A673 (cell line): ENCODE measurements at regions of chr1 and their contacts with region 1.

Region 1: DNA sequence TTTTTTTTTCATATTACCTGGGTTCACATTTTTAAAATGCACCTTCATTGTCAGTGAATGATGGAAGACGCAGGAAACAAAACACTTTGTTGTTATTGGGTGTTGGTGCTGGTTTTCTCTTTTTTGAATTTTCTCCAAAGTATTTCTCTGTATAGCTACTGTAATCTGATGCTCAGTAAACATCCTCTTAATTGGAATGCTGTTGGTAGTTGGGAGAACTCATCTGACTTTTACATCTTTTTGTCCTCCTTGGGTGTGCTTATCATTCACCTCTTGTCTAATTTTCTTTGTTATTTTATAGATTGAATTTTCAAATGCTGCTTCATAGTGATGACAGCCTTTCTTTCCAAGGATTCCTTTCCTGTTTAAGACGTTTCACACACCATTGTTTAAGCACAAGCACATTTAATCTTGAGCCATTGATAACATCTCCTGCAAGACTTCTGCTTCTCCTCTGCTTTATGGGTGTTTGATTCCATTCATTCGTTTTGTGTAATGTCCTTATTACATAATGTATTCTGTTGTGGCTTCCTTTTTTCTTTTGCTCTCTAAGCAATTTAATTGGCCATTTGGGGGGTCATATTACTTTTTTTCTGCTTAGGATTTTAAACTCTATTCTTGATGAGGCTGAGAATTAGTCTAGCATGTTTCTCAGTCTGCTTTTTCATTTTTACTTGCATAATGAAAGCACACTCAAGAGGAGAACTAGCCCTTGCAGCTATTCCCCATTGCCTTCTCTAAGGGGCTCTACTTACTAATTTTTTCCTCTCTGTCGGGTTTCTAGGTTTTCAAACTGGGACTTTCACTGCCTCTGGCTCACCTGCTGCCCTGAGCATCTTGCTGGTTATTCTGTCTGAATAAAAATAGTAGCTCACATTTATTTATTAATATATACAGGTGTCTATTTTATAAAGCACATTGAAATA is 42.0 kb upstream of the CD34 start:
- DNase-seq: no peak
- H3K4me3 ChIP-seq: no peak overlapping the region
- H3K27ac ChIP-seq: no peak overlapping the region
- H3K4me1 ChIP-seq: no peaks in the 10 kb centered on the region
- H3K27me3 ChIP-seq: peaks cover 84% of the 10 kb centered on the region
- CTCF ChIP-seq: no peak

Region 2: GRCh38 chr1:207897188-207897587 is 55.7 kb before region 1 on chr1:
- CTCF ChIA-PET with region 1: no interaction called
- POLR2A ChIA-PET with region 1: no interaction called
- intact Hi-C with region 1: loop called (anchors 2 kb)
- DNase-seq: no peak
- H3K4me3 ChIP-seq: no peak overlapping the region
- H3K27ac ChIP-seq: no peak overlapping the region
- H3K4me1 ChIP-seq: no peaks in the 10 kb centered on the region
- H3K27me3 ChIP-seq: peaks cover 2% of the 10 kb centered on the region
- CTCF ChIP-seq: peak; percentile 31; the same call in 1 of the 2 replicates

Region 3: DNA sequence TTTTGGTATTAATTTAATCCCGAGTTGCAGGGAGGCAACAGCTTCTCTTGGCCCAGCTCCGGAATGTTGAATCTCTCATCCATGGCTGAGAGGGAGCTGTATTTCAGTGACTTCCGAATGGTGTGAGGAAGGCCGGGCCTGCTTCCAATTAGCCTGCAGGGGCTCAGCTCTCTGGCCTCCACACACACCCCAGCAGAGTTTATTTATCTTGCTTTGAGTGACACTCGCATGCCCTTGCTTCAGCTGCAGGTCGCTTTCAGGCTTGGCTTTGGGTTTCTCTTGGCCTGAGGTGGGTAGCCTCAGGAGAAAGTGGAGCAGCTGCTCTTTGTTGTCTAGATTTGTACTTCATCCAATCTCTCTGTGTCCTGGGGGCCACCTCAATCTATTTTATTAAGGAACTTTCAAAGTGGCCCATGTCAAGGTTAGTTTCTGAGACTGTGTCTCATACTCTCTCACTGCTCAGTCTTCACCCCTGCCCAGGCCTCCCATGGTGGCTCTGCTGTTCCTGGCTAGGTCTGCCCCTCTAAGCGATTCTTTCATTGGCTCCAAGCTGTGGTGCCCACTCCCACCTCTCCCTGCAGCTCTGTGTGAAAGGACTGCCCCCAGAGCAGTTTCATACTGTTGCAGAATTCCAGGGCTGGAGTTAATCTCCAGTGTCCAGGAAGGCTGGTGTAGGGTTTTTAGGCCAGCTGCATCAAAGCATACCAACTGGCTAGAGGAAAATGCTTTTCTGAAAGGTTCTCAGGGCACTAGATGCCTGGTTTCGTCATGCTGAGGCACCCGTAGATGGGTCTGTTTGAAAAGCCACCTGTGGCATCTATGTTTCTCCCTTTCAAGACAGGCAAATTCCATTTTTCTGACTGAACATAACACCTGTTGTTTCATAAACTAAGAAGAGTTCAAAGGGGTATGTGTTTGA is 137.8 kb after region 1 on chr1:
- CTCF ChIA-PET with region 1: no interaction called
- POLR2A ChIA-PET with region 1: no interaction called
- intact Hi-C with region 1: no loop called
- DNase-seq: no peak
- H3K4me3 ChIP-seq: no peak overlapping the region
- H3K27ac ChIP-seq: no peak overlapping the region
- H3K4me1 ChIP-seq: no peaks in the 10 kb centered on the region
- H3K27me3 ChIP-seq: no peaks in the 10 kb centered on the region
- CTCF ChIP-seq: no peak